ENCODE measurements at regions of chr6 and their contacts with region 1.

Region 1: GRCh38 chr6:166419286-166419685 is 36.5 kb upstream of the MPC1 start:
- DNase-seq: peak in 3 of 10 donors; percentile 14 to 54 (median 42)
- ATAC-seq: peak; percentile 16 to 52
- H3K4me3 Mint-ChIP-seq: peak overlapping the region; percentile 23 to 75 (median 57)
- H3K27ac Mint-ChIP-seq: peak overlapping the region; percentile 91 to 99 (median 98)
- H3K4me1 Mint-ChIP-seq: peaks cover 39 to 73% (median 70%) of the 10 kb centered on the region in 4 donors
- H3K27me3 Mint-ChIP-seq: no peaks in the 10 kb centered on the region

Region 2: DNA sequence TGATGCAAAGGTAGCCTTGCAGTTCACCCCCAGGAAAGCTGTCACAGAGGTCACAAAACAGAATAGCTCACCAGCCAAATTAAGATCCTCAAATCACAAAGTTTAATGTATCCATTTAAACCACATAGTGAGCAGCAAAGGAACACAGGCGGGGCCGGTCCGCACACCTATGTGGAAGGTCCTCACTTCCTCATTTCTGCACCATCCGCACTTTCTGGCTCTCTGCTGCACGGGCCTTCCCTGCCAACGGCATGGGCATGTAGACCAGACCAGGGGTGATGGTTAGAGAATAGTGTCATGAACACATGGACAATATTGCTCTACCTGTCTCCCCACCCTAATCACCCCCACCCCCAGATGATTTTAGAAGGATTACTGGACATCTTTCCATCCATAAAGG is 239.6 kb before region 1 on chr6:
- POLR2A ChIA-PET with region 1: no interaction called
- DNase-seq: no peak
- ATAC-seq: no peak
- H3K4me3 Mint-ChIP-seq: no peak overlapping the region
- H3K27ac Mint-ChIP-seq: no peak overlapping the region
- H3K4me1 Mint-ChIP-seq: no peaks in the 10 kb centered on the region
- H3K27me3 Mint-ChIP-seq: peaks cover 4 to 28% (median 6%) of the 10 kb centered on the region in 5 donors

Region 3: GRCh38 chr6:166435574-166435973 is 16.3 kb after region 1 on chr6:
- POLR2A ChIA-PET with region 1: interaction called, 26 read pairs
- DNase-seq: peak in 8 of 10 donors; percentile 15 to 72 (median 48)
- ATAC-seq: peak; percentile 91 to 92
- H3K4me3 Mint-ChIP-seq: peak overlapping the region in 8 of 10 donors; percentile 24 to 69 (median 46)
- H3K27ac Mint-ChIP-seq: peak overlapping the region; percentile 66 to 91 (median 78)
- H3K4me1 Mint-ChIP-seq: peaks cover 16 to 31% (median 27%) of the 10 kb centered on the region in 4 donors
- H3K27me3 Mint-ChIP-seq: peaks cover 0 to 3% (median 0%) of the 10 kb centered on the region in 5 donors

Region 4: DNA sequence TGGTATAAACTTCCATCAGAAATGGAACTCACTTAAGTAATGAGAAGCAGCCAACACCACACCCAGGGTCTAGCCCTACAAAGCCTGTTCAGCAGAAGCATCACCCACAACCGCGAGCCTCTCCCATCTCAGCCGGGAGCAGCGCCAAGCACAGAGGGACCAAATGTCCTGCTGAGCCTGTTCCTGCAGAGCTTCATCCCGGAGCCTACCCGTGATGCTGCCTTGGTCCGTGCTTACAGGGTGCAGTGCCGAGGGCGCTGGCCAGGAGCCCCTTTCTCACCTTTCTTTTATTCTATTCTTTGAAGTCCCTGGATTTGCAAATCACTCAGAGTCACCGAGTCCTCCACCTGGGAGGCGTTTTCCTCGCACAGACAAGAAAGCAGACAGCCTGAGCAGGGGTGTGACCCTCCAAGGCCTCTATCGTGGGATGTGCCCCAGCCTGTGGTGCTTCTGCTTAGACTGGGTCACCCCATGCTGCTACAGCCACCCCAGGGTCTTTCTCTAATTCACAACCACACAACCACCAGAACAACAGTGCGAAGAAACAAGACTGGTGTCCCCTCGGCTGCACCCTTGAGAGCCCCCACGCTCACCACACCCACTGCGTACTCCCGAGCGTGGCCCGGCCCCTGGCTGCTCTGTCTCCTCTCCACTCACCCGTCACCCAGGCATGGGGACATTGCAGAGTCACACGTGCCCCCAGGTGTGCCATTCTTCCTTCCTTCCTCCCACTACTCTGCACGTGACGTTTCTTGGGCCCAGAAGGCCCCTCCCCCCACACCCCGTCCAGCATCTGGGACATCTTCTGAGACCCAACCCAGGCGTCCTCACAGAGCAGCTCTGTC is 55.7 kb after region 1 on chr6:
- POLR2A ChIA-PET with region 1: no interaction called
- DNase-seq: peak in 1 of 10 donors; percentile 52
- ATAC-seq: no peak
- H3K4me3 Mint-ChIP-seq: no peak overlapping the region
- H3K27ac Mint-ChIP-seq: peak overlapping the region in 1 of 10 donors; percentile 32
- H3K4me1 Mint-ChIP-seq: peaks cover 7 to 16% (median 10%) of the 10 kb centered on the region in 4 donors
- H3K27me3 Mint-ChIP-seq: peaks cover 0 to 1% (median 0%) of the 10 kb centered on the region in 5 donors